ENCODE measurements at regions of chr19 and their contacts with region 1.

Region 1: DNA sequence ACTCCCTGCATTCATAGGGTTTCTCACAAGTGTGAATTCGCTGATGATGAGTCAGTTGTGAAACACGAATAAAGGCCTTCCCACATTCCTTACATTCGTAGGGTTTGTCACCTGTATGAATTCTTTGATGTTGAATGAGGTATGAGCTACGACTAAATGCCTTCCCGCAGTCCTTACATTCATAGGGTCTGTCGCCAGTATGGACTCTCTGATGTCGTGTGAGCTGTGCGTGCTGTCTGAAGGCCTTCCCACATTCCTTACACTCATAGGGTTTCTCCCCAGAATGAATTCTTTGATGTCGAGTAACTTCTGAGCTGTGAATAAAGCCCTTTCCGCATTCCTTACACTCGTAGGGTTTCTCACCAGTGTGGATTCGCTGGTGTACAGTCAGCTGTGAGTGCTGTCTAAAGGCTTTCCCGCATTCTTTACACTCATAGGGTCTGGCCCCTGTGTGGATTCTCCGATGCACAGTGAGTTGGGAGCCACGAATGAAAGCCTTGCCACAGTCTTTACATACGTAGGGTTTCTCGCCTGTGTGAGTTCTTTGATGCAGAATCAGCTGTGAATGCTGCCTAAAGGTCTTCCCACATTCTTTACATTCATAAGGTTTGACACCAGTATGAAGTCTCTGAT is 30.5 kb upstream of the COX7A1 start:
- DNase-seq: no peak

Region 2: GRCh38 chr19:36132489-36132891 is 50.2 kb before region 1 on chr19:
- intact Hi-C with region 1: loop called (anchors 5 kb)
- DNase-seq: no peak

Region 3: DNA sequence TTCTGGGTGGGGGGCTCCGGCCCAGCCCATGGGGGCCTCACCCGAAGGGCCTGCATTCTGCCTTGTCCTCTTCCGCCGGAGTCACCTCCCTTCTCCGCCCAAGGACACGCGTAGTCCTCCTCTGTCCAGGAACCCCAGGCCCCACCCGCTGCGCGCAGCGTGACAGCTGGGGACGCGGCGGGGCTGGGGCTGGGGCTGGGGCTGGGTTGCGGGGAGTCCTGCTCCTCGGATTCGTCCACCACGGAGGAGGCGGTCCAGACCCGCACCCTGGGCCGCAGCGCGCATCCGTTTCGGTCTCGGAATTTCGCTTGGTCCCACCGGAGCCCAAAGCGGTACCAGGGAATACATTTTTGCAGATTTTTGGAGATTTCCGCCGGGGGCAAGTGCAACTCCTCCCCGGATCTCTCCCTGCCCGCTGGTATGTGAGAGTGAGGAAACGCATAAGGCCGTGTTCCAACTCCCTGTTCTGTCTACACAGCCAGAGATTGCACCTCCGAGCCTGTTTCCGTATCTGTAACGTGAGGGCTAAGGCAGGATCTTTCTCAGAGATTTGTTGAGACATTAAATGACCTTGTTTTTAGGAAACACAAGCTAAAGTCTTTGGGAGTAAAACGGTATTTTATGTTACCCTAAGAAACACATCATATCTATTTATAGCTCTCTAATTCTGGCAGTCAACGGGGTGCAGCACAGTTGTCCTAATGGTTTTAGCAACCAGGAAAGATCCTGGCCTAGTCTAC is 30.2 kb before region 1 on chr19 and contains the start of gene COX7A1:
- intact Hi-C with region 1: no loop called
- DNase-seq: peak in 30 of 42 donors; percentile 13 to 66 (median 32)

Region 4: GRCh38 chr19:36198119-36198518 is 15.4 kb after region 1 on chr19:
- intact Hi-C with region 1: no loop called
- DNase-seq: peak in 17 of 42 donors; percentile 17 to 81 (median 39)

Measured in head of caudate nucleus (tissue), 42 donors.